ENCODE measurements at regions of chr9 and their contacts with region 1.

Region 1: GRCh38 chr9:16459421-16460148 is 410.9 kb downstream of the BNC2 start:
- DNase-seq: no peak
- ATAC-seq: no peak
- H3K4me3 ChIP-seq: no peak overlapping the region
- H3K4me3 Mint-ChIP-seq: no peak overlapping the region
- H3K27ac ChIP-seq: no peak overlapping the region
- H3K27ac Mint-ChIP-seq: no peak overlapping the region
- H3K4me1 ChIP-seq: no peaks in the 10 kb centered on the region
- H3K4me1 Mint-ChIP-seq: no peaks in the 10 kb centered on the region
- H3K27me3 ChIP-seq: no peaks in the 10 kb centered on the region
- H3K27me3 Mint-ChIP-seq: no peaks in the 10 kb centered on the region

Region 2: GRCh38 chr9:15501179-15501578 is 958.4 kb before region 1 on chr9:
- CTCF ChIA-PET with region 1: no interaction called
- POLR2A ChIA-PET with region 1: no interaction called
- intact Hi-C with region 1: no loop called
- DNase-seq: peak in 1 of 9 donors; percentile 27
- ATAC-seq: no peak
- H3K4me3 ChIP-seq: no peak overlapping the region
- H3K4me3 Mint-ChIP-seq: peak overlapping the region in 8 of 10 donors; percentile 19 to 66 (median 52)
- H3K27ac ChIP-seq: no peak overlapping the region
- H3K27ac Mint-ChIP-seq: peak overlapping the region; percentile 11 to 92 (median 60)
- H3K4me1 ChIP-seq: peaks cover 8 to 28% of the 10 kb centered on the region in 2 donors
- H3K4me1 Mint-ChIP-seq: peaks cover 35 to 87% (median 70%) of the 10 kb centered on the region in 7 donors
- H3K27me3 ChIP-seq: no peaks in the 10 kb centered on the region
- H3K27me3 Mint-ChIP-seq: no peaks in the 10 kb centered on the region

Region 3: GRCh38 chr9:15755660-15756059 is 703.9 kb before region 1 on chr9:
- CTCF ChIA-PET with region 1: no interaction called
- POLR2A ChIA-PET with region 1: no interaction called
- intact Hi-C with region 1: no loop called
- DNase-seq: no peak
- ATAC-seq: no peak
- H3K4me3 ChIP-seq: no peak overlapping the region
- H3K4me3 Mint-ChIP-seq: no peak overlapping the region
- H3K27ac ChIP-seq: no peak overlapping the region
- H3K27ac Mint-ChIP-seq: no peak overlapping the region
- H3K4me1 ChIP-seq: no peaks in the 10 kb centered on the region
- H3K4me1 Mint-ChIP-seq: no peaks in the 10 kb centered on the region
- H3K27me3 ChIP-seq: no peaks in the 10 kb centered on the region
- H3K27me3 Mint-ChIP-seq: no peaks in the 10 kb centered on the region

Region 4: GRCh38 chr9:16289639-16290038 is 169.9 kb before region 1 on chr9:
- CTCF ChIA-PET with region 1: no interaction called
- POLR2A ChIA-PET with region 1: no interaction called
- intact Hi-C with region 1: loop called in 1 of 2 experiments (anchors 10 kb)
- DNase-seq: no peak
- ATAC-seq: peak; percentile 68
- H3K4me3 ChIP-seq: no peak overlapping the region
- H3K4me3 Mint-ChIP-seq: no peak overlapping the region
- H3K27ac ChIP-seq: no peak overlapping the region
- H3K27ac Mint-ChIP-seq: no peak overlapping the region
- H3K4me1 ChIP-seq: no peaks in the 10 kb centered on the region
- H3K4me1 Mint-ChIP-seq: no peaks in the 10 kb centered on the region
- H3K27me3 ChIP-seq: no peaks in the 10 kb centered on the region
- H3K27me3 Mint-ChIP-seq: peaks cover 0 to 14% (median 5%) of the 10 kb centered on the region in 5 donors

Measured in naive thymus-derived CD4-positive, alpha-beta T cell (primary cell).